ENCODE measurements at regions of chr4 and their contacts with region 1.

Region 1: GRCh38 chr4:15956179-15956850 is 6.7 kb downstream of the FGFBP2 start:
- DNase-seq: peak; percentile 61
- H3K4me3 Mint-ChIP-seq: no peak overlapping the region
- H3K27ac Mint-ChIP-seq: no peak overlapping the region
- H3K4me1 Mint-ChIP-seq: peaks cover 6% of the 10 kb centered on the region
- H3K27me3 Mint-ChIP-seq: peaks cover 11% of the 10 kb centered on the region

Region 2: GRCh38 chr4:15805583-15806517 is 150.5 kb before region 1 on chr4:
- intact Hi-C with region 1: loop called (anchors 1 kb)
- DNase-seq: no peak
- H3K4me3 Mint-ChIP-seq: no peak overlapping the region
- H3K27ac Mint-ChIP-seq: no peak overlapping the region
- H3K4me1 Mint-ChIP-seq: peaks cover 74% of the 10 kb centered on the region
- H3K27me3 Mint-ChIP-seq: no peaks in the 10 kb centered on the region

Region 3: DNA sequence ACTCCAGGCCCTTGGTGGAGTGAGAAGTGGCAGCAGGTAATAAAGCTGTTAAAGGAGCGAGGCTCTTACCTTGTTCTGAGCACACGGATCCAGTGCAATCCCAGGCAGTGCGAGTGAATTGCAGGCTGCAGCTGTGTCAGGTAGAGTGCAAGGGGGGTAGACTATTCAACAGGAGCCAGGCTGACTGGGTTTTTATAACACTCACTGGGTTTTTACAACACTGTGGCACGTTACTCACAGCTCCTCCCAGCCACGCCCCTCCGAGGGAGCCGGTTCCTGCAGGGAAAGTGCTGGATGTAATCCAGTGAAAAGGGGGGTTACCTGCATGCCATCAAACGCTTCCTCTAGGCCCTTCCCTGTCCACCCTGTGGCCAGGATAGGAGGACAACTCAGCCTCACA is 18.1 kb before region 1 on chr4:
- intact Hi-C with region 1: no loop called
- DNase-seq: no peak
- H3K4me3 Mint-ChIP-seq: no peak overlapping the region
- H3K27ac Mint-ChIP-seq: no peak overlapping the region
- H3K4me1 Mint-ChIP-seq: no peaks in the 10 kb centered on the region
- H3K27me3 Mint-ChIP-seq: peaks cover 12% of the 10 kb centered on the region